Heart right ventricle (tissue), 16 donors: ENCODE measurements at regions of chr17 and their contacts with region 1.

Region 1: DNA sequence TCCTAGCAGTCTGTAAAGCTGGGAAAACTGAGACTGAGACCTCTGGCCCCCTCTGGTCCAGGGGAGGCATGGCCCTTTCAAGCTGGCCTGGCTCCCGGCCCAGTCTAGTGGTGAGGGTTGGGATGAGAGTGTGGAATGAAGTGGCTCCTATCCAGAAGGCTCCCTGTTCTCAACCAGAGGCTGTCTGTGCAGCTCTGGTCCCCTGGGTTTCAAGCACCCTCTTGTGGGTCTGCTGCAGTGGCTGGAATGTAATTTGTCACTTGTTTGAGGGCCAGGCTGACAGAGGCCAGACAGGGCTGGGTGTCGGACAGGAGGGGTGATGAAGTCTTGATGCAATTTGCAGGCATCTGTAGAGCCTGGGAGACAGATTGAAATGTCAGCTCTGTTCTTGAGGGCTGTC is 22.1 kb upstream of the PHF12 start:
- DNase-seq: peak; percentile 82 to 83
- ATAC-seq: peak; percentile 74 to 93 (median 84)
- H3K4me3 ChIP-seq: no peak overlapping the region
- H3K27ac ChIP-seq: peak overlapping the region; percentile 23 to 81 (median 61)
- H3K4me1 ChIP-seq: peaks cover 5 to 67% (median 48%) of the 10 kb centered on the region in 9 donors
- H3K27me3 ChIP-seq: no peaks in the 10 kb centered on the region
- CTCF ChIP-seq: peak in 4 of 9 donors; percentile 15 to 30 (median 22)

Region 2: GRCh38 chr17:29032857-29033197 is 59.4 kb after region 1 on chr17:
- intact Hi-C with region 1: loop called in 1 of 10 experiments (anchors 5 kb)
- DNase-seq: no peak
- ATAC-seq: no peak
- H3K4me3 ChIP-seq: no peak overlapping the region
- H3K27ac ChIP-seq: no peak overlapping the region
- H3K4me1 ChIP-seq: no peaks in the 10 kb centered on the region
- H3K27me3 ChIP-seq: peaks cover 0 to 60% (median 41%) of the 10 kb centered on the region in 7 donors
- CTCF ChIP-seq: no peak

Region 3: DNA sequence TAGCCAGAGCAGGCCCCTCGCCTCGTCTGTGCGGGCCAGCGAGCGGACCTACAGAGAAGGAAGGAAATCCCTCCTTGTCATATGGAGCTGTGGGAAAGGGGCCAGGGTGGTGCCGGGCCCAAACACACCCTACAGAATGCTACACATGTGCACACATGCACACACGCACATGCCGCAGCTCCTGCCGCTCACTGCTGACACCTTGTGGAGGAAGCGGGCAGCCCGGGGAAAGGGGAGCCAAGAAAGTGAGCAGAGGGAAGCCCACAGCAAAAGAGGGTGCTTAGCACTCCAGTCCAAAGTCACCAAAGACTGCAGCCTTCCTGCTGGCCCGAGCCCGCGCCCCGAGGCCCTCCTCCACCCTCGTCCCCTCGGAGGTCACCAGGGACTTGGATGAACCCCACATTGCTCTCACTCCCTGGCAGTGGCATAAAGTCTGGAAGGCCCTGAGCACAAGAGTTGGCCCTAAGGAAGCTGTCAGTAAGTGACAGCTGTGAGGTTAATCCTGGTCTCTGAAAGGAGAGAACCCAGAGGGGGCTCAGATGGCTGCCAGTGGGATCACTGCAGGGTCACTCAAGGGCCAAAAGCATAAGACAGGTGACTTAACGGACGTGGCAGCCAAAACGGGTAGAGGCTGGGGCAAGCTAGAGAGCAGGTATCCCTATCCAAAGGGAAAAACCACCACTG is 138.5 kb after region 1 on chr17:
- intact Hi-C with region 1: loop called in 3 of 10 experiments (anchors 1 to 5 kb)
- DNase-seq: peak; percentile 65 to 81
- ATAC-seq: peak; percentile 50 to 73 (median 62)
- H3K4me3 ChIP-seq: no peak overlapping the region
- H3K27ac ChIP-seq: peak overlapping the region in 9 of 10 donors; percentile 4 to 78 (median 49)
- H3K4me1 ChIP-seq: peaks cover 26 to 59% (median 34%) of the 10 kb centered on the region in 9 donors
- H3K27me3 ChIP-seq: no peaks in the 10 kb centered on the region
- CTCF ChIP-seq: peak; percentile 76 to 95 (median 92)

Region 4: DNA sequence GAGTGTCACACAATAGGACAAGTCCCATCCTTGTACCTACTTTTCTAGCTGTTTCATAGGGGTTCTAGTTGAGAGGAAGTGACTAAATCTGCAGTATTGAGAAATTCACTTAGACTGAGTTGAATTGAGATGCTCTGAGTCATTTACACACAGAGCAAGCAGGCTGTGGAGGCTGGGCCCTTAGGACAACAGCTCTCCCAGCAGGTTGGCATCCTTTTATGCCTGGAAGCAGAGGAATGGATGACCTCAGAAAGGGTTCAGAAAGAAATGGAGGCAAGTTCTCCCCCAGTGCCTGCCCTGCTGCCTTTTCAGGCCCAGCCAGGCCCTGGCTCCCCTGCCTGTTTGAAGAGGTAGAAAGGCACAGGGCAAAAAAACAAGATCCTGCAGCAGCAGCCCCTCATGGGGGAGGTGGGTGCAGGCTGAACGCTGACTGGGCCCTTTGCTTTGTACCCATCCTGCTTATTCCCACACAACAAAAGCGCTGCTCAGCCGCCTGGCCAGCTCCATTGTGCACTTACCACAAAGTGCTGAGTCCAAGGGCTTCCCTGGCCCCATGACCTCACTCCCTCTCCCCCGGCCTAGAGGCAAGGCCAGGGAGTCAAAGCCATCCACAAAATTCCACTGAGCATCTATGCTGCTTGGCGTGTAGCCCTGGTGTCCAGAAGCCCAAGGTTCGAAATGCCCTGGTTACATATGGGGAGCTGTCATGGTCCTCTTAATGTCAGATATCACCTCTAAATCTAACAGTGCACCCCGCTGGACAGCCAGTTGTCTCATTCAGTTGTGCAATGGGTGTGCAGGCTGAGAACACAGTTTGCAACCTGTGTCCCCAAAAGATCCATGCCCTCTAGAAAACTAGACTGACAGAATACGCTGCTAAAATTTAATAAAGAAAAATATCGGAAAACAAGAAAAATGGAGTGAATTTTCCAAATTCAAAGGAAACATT is 267.9 kb after region 1 on chr17:
- intact Hi-C with region 1: no loop called
- DNase-seq: no peak
- ATAC-seq: peak in 7 of 8 donors; percentile 17 to 92 (median 49)
- H3K4me3 ChIP-seq: no peak overlapping the region
- H3K27ac ChIP-seq: peak overlapping the region in 1 of 10 donors; percentile 29
- H3K4me1 ChIP-seq: peaks cover 0 to 31% (median 0%) of the 10 kb centered on the region in 9 donors
- H3K27me3 ChIP-seq: no peaks in the 10 kb centered on the region
- CTCF ChIP-seq: no peak

Region 5: DNA sequence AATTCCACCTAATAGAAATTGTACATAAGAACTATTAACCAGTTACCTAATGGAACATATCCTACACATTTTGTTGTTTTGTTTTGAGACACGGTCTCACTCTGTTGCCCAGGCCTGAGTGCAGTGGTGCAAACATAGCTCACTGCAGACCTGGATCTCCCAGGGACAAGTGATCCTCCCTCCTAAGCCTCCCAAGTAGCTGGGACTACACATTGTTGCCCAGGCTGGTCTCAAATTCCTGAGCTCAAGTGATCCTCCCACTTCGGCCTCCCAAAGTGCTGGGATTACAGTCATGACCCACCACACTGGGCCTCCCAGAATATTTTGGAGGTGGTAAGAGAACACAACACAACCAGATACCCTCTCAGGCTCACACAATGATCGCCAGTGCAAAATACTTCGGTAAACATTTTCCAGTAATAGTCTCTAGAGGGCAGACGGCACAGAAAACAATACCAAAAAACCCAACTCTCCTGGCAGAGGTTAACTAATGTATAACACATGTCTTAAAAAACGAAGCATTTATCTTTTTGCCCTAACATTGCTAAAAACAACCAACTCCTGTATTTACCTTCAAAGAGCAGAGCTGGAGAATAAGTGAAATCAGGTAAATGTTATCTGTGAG is 310.0 kb after region 1 on chr17:
- intact Hi-C with region 1: no loop called
- DNase-seq: no peak
- ATAC-seq: no peak
- H3K4me3 ChIP-seq: no peak overlapping the region
- H3K27ac ChIP-seq: no peak overlapping the region
- H3K4me1 ChIP-seq: peaks cover 9 to 83% (median 68%) of the 10 kb centered on the region in 9 donors
- H3K27me3 ChIP-seq: no peaks in the 10 kb centered on the region
- CTCF ChIP-seq: peak in 4 of 9 donors; percentile 6 to 27 (median 10)